ENCODE measurements at regions of chr7 and their contacts with region 1.

Region 1: DNA sequence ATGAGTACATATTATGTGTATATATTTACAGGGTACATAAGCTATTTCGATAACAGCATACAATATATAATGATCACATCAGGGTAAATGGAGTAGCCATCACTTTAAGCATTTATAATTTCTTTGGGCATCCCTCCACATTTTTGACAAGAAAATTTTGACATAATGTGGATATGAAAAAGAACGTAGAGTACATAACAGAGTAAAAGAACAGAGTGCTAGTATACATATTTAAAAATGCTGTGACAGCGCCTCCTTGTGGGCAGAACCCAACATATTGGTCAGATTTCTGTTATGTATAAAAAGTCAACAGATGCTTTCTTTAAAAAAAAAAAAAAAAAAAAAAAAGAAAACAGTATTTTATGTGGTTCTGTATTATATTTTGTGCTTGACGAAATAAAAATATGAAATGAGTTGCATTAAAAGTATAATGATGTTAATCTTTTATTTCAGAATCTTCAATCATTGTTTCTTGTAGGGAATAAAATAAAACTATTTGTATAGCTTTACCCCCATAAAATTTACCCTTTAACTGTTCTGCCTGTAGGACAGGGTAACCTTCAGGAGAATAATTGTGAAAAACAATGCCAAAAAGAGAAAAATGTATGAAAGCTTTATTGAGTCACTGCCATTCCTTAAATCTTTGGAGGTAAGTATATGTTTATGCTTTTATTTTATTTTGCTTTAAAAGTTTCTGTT is 18.3 kb upstream of the HBP1 start:
- DNase-seq: peak; percentile 57
- H3K4me3 Mint-ChIP-seq: no peak overlapping the region
- H3K27ac Mint-ChIP-seq: no peak overlapping the region
- H3K4me1 Mint-ChIP-seq: no peaks in the 10 kb centered on the region
- H3K27me3 Mint-ChIP-seq: peaks cover 5% of the 10 kb centered on the region

Region 2: GRCh38 chr7:106176414-106177299 is 973.9 kb before region 1 on chr7:
- intact Hi-C with region 1: loop called (anchors 10 kb)
- DNase-seq: peak; percentile 54
- H3K4me3 Mint-ChIP-seq: no peak overlapping the region
- H3K27ac Mint-ChIP-seq: no peak overlapping the region
- H3K4me1 Mint-ChIP-seq: peaks cover 5% of the 10 kb centered on the region
- H3K27me3 Mint-ChIP-seq: peaks cover 11% of the 10 kb centered on the region

Region 3: DNA sequence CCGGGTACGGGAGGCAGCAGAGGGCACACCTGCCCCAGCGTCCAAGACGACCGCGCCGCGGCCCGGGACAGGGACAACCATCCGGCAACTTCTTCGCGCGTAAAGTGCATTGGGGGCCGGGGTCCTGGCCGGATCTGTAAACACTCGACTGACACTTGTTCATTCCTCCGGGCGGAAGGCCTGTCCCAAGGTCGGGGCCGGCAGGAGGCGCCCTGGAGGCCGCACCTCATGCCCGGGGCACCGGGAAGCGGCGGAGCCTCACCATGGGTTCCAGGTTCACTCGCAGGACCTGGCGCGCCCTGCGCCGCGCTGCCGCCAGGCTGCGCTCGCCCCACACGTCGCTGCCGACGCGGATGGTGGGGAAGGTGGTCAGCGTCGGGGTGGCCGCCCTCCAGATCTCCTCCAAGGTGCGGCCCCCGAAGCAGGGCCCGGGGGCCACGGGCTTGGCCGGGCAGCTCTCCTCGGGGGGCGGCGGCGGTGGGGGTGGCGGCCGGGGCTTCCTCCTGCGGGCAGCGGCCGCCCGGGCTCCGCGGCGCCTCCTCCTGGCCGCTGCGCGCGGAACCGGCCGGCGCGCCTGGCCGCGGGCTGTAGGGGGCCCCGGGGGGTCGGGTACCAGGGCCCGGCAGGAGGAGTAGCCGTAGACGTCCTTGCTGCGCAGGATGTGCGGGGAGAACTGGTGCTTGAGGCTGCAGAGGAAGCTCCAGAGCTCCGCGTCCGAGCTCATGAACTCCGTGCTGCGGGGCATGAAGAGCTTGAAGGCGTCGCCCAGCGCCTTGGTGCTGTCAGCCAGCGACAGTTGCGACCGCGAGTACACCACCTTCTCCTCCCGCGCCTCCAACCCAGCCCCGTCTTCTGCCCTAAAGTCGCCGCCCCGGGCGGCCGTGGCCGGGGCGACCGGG is 490.3 kb before region 1 on chr7:
- intact Hi-C with region 1: loop called (anchors 1 kb)
- DNase-seq: peak; percentile 73
- H3K4me3 Mint-ChIP-seq: peak overlapping the region; percentile 94
- H3K27ac Mint-ChIP-seq: peak overlapping the region; percentile 92
- H3K4me1 Mint-ChIP-seq: peaks cover 32% of the 10 kb centered on the region
- H3K27me3 Mint-ChIP-seq: peaks cover 3% of the 10 kb centered on the region

Region 4: GRCh38 chr7:106779877-106780276 is 370.6 kb before region 1 on chr7:
- intact Hi-C with region 1: no loop called
- DNase-seq: no peak
- H3K4me3 Mint-ChIP-seq: no peak overlapping the region
- H3K27ac Mint-ChIP-seq: no peak overlapping the region
- H3K4me1 Mint-ChIP-seq: peaks cover 16% of the 10 kb centered on the region
- H3K27me3 Mint-ChIP-seq: peaks cover 2% of the 10 kb centered on the region

Region 5: DNA sequence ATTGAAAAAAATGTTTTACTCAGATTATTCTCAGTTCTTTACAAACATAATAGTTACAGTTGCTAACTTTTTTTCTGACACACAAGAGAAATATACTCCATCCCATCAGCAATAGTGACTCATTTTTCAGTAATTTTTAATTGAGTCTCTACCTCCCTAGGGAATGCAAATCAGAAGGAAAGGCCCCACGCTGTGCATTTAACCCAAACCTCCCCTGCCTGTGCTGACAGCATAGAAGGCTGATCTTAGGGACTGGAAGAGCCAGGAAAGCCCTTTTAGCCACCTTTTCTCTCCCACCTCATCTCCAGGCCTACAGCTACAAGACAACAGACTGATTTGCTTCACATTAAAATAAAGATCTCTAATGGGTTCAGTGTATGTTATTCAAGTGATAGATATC is 310.2 kb before region 1 on chr7:
- intact Hi-C with region 1: no loop called
- DNase-seq: no peak
- H3K4me3 Mint-ChIP-seq: no peak overlapping the region
- H3K27ac Mint-ChIP-seq: no peak overlapping the region
- H3K4me1 Mint-ChIP-seq: no peaks in the 10 kb centered on the region
- H3K27me3 Mint-ChIP-seq: peaks cover 5% of the 10 kb centered on the region

Region 6: GRCh38 chr7:107501593-107501992 is 351.1 kb after region 1 on chr7:
- intact Hi-C with region 1: loop called (anchors 1 kb)
- DNase-seq: no peak
- H3K4me3 Mint-ChIP-seq: no peak overlapping the region
- H3K27ac Mint-ChIP-seq: no peak overlapping the region
- H3K4me1 Mint-ChIP-seq: peaks cover 9% of the 10 kb centered on the region
- H3K27me3 Mint-ChIP-seq: no peaks in the 10 kb centered on the region

Region 7: DNA sequence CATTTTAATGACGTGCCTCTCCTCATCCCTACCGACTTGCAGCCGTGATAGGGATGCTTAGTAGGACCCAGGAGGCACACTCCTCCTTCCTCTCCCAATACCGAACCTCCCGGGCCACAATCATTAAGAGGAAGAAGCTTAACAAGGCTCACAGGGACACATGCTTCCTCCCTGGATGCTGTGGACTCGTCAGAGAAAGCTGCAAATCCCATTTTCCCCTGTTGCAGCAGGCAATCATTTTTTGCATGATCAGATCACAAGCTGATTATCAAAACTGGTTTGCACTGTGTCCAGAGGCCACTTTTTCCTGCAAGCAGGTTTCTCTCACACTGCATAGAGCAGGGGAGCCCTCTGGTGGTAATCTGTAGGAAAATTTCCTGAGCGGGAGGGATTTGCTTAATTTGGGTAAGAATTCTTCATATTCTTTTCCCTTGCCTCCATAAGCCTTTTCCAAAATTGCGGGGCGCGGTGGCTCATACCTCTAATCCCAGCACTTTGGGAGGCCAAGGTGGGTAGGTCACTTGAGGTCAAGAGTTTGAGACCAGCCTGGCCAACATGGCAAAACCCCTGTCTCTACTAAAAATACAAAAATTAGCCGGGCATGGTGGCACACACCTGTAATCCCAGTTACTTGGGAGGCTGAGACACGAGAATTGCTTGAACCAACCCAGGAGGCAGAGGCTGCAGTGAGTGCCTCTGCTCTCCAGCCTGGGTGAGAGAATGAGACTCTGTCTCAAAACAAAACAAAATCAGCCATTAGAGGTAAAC is 995.7 kb after region 1 on chr7:
- intact Hi-C with region 1: loop called (anchors 5 kb)
- DNase-seq: peak; percentile 32
- H3K4me3 Mint-ChIP-seq: no peak overlapping the region
- H3K27ac Mint-ChIP-seq: no peak overlapping the region
- H3K4me1 Mint-ChIP-seq: no peaks in the 10 kb centered on the region
- H3K27me3 Mint-ChIP-seq: peaks cover 9% of the 10 kb centered on the region